ENCODE measurements at regions of chr14 and their contacts with region 1.

Region 1: DNA sequence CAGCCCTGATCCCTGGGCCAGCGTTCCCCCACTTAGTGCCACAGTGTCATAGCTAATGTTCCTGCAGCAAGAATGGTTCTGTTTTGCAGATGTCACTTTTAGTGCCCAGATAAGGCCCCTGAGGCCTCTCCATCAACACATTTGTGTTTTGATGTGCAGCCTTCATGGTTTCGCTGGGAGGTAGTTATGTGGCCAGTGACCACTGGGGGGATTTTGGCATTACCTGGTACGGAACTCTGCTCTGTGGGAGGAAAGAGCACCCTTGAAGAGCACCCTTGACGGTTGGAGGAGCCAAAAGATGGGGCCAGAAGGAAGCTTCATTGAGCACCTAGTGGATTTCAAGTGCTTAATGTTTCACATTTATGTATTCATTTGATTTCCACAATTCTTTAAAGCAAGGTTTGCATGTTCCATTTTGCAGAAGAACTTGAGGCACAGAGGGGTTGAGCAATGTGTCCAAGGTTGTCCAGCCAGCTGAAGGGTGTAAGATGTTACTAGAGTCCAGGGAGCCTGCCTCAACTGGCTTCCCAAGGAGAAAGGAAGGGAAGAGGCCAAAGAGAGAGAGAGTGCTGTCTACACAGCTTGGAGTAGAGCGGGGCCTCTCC is 13.0 kb downstream of the SERPINA11 start:
- DNase-seq: no peak
- H3K4me3 ChIP-seq: no peak overlapping the region
- H3K4me1 ChIP-seq: no peaks in the 10 kb centered on the region
- H3K27me3 ChIP-seq: no peaks in the 10 kb centered on the region

Region 2: GRCh38 chr14:94485944-94486841 is 46.6 kb after region 1 on chr14:
- in situ Hi-C with region 1: loop called (anchors 10 kb)
- DNase-seq: peak; percentile 70 to 84
- H3K4me3 ChIP-seq: peak overlapping the region; percentile 13
- H3K4me1 ChIP-seq: peaks cover 12% of the 10 kb centered on the region
- H3K27me3 ChIP-seq: no peaks in the 10 kb centered on the region